Prostate gland (tissue), 2 donors: ENCODE measurements at regions of chr11 and their contacts with region 1.

Region 1: GRCh38 chr11:109939166-109939810 is 153.9 kb upstream of the ZC3H12C start:
- DNase-seq: peak; percentile 29
- H3K4me3 ChIP-seq: no peak overlapping the region
- H3K27ac ChIP-seq: no peak overlapping the region
- H3K4me1 ChIP-seq: no peaks in the 10 kb centered on the region
- H3K27me3 ChIP-seq: no peaks in the 10 kb centered on the region
- CTCF ChIP-seq: peak in 2 of 4 experiments; percentile 27 to 37
- POLR2A ChIP-seq: no peak

Region 2: DNA sequence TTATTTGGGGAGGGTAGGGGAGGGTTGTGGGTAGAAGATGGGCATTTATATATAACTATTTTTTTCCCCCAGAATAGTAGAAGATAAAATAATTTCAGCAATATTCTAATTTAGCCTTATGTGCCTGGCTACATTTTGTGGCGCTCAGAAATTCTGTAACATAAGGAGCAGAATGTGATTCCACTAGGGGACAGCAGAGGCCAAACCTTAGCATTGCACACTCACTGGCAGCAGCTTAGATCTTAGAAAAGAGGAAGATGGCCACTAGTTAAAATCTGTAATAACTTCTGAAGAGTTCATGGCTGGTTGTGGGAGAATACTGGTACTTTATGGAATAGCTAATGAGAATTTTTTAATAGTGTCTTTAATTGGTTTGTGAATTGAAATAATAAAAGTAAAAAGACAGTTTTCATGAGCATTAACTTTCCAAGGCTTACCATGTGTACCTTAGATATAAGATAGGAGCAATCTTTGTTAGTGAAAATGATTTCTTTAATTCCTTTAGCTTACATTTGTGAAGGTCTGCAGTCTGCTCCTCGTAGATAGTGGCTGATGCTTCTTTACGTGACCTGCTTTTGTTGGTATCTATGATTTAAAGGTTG is 1241.3 kb before region 1 on chr11:
- intact Hi-C with region 1: loop called (anchors 5 kb)
- DNase-seq: peak; percentile 45
- H3K4me3 ChIP-seq: no peak overlapping the region
- H3K27ac ChIP-seq: no peak overlapping the region
- H3K4me1 ChIP-seq: peaks cover 7% of the 10 kb centered on the region
- H3K27me3 ChIP-seq: no peaks in the 10 kb centered on the region
- CTCF ChIP-seq: peak; percentile 37 to 84 (median 76)
- POLR2A ChIP-seq: no peak

Region 3: DNA sequence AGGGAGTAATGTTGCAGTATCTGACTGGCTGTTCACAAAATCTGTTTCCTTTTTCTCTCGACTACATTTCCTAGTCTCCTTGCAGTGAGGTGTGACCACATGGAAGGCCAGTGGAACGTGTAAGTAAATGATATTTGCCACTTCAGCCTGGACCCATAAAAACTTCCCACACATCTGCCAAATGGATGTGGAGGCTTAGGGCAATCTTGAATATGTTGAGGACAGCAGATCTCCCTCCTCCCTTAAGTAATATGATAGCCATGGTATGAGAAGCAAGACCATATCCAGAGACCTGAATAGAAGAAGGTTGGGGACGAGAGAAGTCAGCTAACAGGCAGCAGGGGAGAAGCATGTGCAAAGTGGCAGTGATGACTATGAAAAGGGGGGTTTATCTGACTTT is 550.3 kb before region 1 on chr11:
- intact Hi-C with region 1: no loop called
- DNase-seq: no peak
- H3K4me3 ChIP-seq: no peak overlapping the region
- H3K27ac ChIP-seq: no peak overlapping the region
- H3K4me1 ChIP-seq: no peaks in the 10 kb centered on the region
- H3K27me3 ChIP-seq: no peaks in the 10 kb centered on the region
- CTCF ChIP-seq: no peak
- POLR2A ChIP-seq: no peak

Region 4: GRCh38 chr11:109914809-109915653 is 24.3 kb before region 1 on chr11:
- intact Hi-C with region 1: no loop called
- DNase-seq: no peak
- H3K4me3 ChIP-seq: no peak overlapping the region
- H3K27ac ChIP-seq: no peak overlapping the region
- H3K4me1 ChIP-seq: no peaks in the 10 kb centered on the region
- H3K27me3 ChIP-seq: no peaks in the 10 kb centered on the region
- CTCF ChIP-seq: no peak
- POLR2A ChIP-seq: no peak

Region 5: GRCh38 chr11:110376711-110377324 is 437.5 kb after region 1 on chr11:
- intact Hi-C with region 1: loop called (anchors 5 kb)
- DNase-seq: peak; percentile 70
- H3K4me3 ChIP-seq: peak overlapping the region in 1 of 2 donors; percentile 11
- H3K27ac ChIP-seq: peak overlapping the region; percentile 27 to 49
- H3K4me1 ChIP-seq: no peaks in the 10 kb centered on the region
- H3K27me3 ChIP-seq: no peaks in the 10 kb centered on the region
- CTCF ChIP-seq: peak; percentile 17 to 76 (median 63)
- POLR2A ChIP-seq: no peak